Psoas muscle (tissue), 8 donors: ENCODE measurements at regions of chr19 and their contacts with region 1.

Region 1: DNA sequence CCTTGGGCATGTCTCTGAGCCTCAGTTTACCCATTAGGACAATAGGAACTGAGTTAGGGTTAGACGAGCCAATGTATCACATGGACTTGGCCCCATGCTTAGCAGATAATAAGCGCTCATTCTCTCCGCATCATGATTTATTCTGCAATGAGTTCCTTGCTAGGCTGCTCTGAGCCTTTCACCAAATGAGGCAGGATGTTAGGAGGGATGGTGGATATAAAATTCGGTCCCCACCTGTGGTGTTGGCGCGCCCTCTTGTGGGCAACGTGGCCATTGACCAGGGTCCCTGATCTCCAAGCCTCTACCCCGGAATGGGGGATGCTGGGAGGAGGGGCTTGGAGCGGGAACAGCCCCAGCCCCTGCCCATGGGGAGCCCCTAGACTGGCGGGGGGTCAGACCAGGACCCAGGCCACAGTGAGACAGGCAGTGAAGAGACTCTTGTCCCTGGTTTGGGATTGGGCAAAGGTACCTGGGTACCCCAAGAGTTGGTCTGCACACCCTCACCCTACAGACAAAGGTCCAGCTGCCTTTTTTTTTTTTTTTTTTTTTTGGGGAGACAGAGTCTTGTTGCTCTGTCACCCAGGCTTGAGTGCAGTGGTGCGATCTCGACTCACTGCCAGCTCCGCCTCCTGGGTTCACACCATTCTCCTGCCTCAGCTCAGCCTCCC is 43.9 kb downstream of the CERS4 start:
- DNase-seq: peak; percentile 83 to 90
- ATAC-seq: peak; percentile 67 to 91 (median 78)
- H3K4me3 ChIP-seq: no peak overlapping the region
- H3K27ac ChIP-seq: no peak overlapping the region
- H3K4me1 ChIP-seq: no peaks in the 10 kb centered on the region
- H3K27me3 ChIP-seq: no peaks in the 10 kb centered on the region
- CTCF ChIP-seq: peak; percentile 95

Region 2: DNA sequence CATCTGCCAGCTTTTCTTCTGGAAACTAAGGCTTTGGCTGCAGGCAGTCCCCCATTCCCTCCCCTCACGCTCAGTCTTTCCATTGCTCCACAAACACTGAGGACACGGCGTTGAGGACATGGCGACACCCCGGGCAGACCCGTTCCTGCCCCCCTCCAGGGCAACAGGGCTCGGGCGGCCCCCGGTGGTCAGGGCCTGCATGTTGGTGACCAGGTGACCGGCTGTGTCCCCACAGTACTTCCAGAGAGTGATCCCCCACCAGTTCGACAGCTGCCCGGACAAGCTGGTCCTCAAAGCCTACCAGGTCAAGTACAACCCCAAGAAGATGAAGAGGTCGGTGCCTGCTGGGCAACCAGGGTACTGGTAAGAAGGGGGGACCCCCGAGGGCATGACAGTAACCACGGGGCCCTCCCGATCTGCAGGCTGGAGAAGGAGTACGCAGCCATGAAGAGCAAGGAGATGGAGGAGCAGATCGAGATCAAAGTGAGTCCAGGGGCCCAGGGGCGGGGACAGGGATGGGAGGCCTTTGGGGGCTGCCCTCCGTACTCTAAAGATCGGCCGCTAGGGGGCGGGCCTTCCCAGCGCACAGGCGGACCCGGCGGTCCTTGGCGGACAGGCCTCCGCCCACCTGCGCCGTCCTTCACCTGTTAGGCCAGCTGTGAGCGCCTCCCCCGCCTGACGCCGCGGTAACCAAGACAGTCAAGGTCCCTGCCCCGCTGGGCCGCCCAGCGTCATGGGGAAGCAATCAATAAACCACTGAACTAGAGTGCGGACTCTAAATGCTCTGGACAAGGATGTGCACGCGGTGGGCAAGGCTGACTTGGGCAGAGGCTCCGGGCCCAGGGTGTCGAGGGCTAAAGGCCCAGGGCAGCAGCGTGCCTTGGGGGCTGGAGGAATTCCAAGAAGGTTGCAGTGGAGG is 399.9 kb before region 1 on chr19:
- intact Hi-C with region 1: loop called in 1 of 2 experiments (anchors 10 kb)
- DNase-seq: peak; percentile 66 to 79
- ATAC-seq: peak; percentile 85 to 94 (median 88)
- H3K4me3 ChIP-seq: no peak overlapping the region
- H3K27ac ChIP-seq: no peak overlapping the region
- H3K4me1 ChIP-seq: peaks cover 9% of the 10 kb centered on the region
- H3K27me3 ChIP-seq: no peaks in the 10 kb centered on the region
- CTCF ChIP-seq: peak; percentile 82

Region 3: GRCh38 chr19:7943444-7944176 is 309.4 kb before region 1 on chr19 and contains the start of gene TIMM44:
- intact Hi-C with region 1: loop called (anchors 1 to 2 kb)
- DNase-seq: peak; percentile 99 to 100
- ATAC-seq: peak; percentile 97 to 98 (median 98)
- H3K4me3 ChIP-seq: peak within 1 kb of the TSS; percentile 99
- H3K27ac ChIP-seq: peak within 1 kb of the TSS; percentile 99
- H3K4me1 ChIP-seq: peaks cover 17% of the 10 kb centered on the region
- H3K27me3 ChIP-seq: no peaks in the 10 kb centered on the region
- CTCF ChIP-seq: no peak
- total RNA-seq, gene TIMM44: 67.0 to 95.8 (median 80.0) TPM

Region 4: GRCh38 chr19:8158411-8159074 is 94.5 kb before region 1 on chr19:
- intact Hi-C with region 1: loop called (anchors 2 to 5 kb)
- DNase-seq: no peak
- ATAC-seq: peak in 3 of 4 donors; percentile 53 to 66 (median 55)
- H3K4me3 ChIP-seq: no peak overlapping the region
- H3K27ac ChIP-seq: no peak overlapping the region
- H3K4me1 ChIP-seq: no peaks in the 10 kb centered on the region
- H3K27me3 ChIP-seq: peaks cover 0 to under 1% (median 0%) of the 10 kb centered on the region in 3 donors
- CTCF ChIP-seq: peak; percentile 60

Region 5: DNA sequence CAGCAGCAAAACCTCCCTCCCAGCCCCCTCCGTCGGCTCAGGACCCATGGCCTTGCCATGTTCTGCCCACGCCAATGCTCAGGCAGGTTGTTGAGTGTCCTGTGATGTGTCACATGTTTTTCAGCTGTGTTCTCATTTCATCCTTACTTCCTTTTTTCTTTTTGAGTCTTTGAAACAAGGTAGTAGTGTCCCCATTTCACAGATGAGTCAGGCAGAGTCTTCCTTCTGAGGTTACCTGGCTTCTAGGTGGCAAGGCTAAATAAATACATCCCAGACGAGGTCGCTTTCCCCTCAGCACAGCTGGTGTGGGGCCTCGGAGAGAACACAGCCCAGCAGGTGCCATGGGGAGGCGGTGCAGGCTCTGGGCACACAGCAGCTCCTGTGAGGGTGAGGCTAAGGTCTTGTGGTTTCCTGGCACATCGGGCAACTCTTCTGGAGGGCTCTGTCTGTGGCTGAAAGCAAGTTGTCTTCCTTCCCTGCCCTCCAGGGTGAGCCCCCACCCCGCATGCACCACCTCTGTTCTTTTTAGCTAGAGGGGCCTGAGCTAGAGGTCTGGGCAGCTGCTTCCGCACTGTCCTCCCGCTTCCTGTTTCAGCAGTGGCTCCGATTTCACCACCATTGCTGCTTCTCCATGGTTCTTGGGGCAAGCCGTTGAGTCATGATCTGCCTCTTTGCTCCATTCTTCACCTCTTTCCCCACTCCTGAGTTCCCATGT is 234.2 kb after region 1 on chr19:
- intact Hi-C with region 1: no loop called
- DNase-seq: no peak
- ATAC-seq: no peak
- H3K4me3 ChIP-seq: no peak overlapping the region
- H3K27ac ChIP-seq: no peak overlapping the region
- H3K4me1 ChIP-seq: peaks cover 2% of the 10 kb centered on the region
- H3K27me3 ChIP-seq: no peaks in the 10 kb centered on the region
- CTCF ChIP-seq: no peak